ENCODE measurements at regions of chr1 and their contacts with region 1.

Region 1: DNA sequence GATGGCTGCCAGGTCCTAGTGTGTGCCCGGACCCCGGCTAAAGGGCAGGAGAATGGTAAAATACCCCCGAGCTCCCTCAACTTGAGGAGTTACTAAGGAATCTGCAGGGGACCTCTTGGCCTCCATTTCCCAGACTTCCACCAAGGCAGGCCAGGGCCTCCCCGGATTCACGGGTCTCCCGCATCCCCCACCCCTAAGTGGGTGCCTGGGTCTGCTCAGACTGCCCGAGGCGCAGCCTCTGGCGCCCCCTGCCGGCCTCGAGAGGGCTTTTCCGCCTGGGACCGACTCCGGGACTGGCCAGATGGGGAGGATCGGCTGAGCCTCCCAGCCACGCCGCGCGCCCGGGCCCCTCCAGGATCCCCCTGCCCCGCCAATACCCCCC is 1.7 kb downstream of the PLEKHG5 start:
- DNase-seq: peak; percentile 80
- H3K4me3 ChIP-seq: peak overlapping the region; percentile 55
- H3K27ac ChIP-seq: no peak overlapping the region
- H3K4me1 ChIP-seq: peaks cover 14% of the 10 kb centered on the region
- H3K27me3 ChIP-seq: peaks cover 16% of the 10 kb centered on the region
- CTCF ChIP-seq: peak; percentile 95

Region 2: GRCh38 chr1:6646499-6647148 is 156.8 kb after region 1 on chr1:
- CTCF ChIA-PET with region 1: no interaction called
- POLR2A ChIA-PET with region 1: no interaction called
- intact Hi-C with region 1: loop called (anchors 2 kb)
- DNase-seq: peak; percentile 71
- H3K4me3 ChIP-seq: no peak overlapping the region
- H3K27ac ChIP-seq: no peak overlapping the region
- H3K4me1 ChIP-seq: no peaks in the 10 kb centered on the region
- H3K27me3 ChIP-seq: no peaks in the 10 kb centered on the region
- CTCF ChIP-seq: peak; percentile 66

Region 3: GRCh38 chr1:7702365-7702764 is 1212.6 kb after region 1 on chr1:
- CTCF ChIA-PET with region 1: no interaction called
- POLR2A ChIA-PET with region 1: no interaction called
- intact Hi-C with region 1: no loop called
- DNase-seq: peak; percentile 35
- H3K4me3 ChIP-seq: no peak overlapping the region
- H3K27ac ChIP-seq: no peak overlapping the region
- H3K4me1 ChIP-seq: no peaks in the 10 kb centered on the region
- H3K27me3 ChIP-seq: peaks cover 66% of the 10 kb centered on the region
- CTCF ChIP-seq: no peak